Aorta (tissue), 5 donors: ENCODE measurements at regions of chr19 and their contacts with region 1.

Region 1: DNA sequence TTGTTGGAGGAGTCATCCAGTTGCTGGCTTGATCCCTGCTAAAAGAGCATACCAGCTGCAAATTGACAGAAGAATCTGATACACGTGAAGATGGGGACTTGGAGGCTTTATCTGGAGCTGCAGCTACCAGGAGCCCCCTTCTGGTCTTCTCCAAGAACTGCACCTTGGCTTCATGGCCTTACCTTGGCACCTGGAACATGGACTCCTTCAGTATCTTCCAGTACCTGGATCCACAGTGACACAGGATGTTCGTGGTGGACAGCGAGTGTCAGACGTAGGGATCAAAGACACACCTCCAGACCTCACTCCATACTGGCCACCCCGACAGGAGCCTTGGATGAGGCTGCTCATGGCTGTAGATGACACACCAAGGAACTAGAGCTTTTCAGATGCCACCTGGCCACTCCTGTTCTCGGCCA is 9.9 kb upstream of the ACSBG2 start:
- DNase-seq: peak in 1 of 2 donors; percentile 60
- ATAC-seq: peak; percentile 81
- H3K4me3 ChIP-seq: no peak overlapping the region
- H3K27ac ChIP-seq: no peak overlapping the region
- H3K4me1 ChIP-seq: no peaks in the 10 kb centered on the region
- H3K27me3 ChIP-seq: no peaks in the 10 kb centered on the region

Region 2: GRCh38 chr19:5987077-5987818 is 138.3 kb before region 1 on chr19:
- intact Hi-C with region 1: loop called in 1 of 2 experiments (anchors 5 kb)
- DNase-seq: peak; percentile 85 to 86
- ATAC-seq: peak; percentile 79
- H3K4me3 ChIP-seq: peak overlapping the region; percentile 0 to 8
- H3K27ac ChIP-seq: no peak overlapping the region
- H3K4me1 ChIP-seq: peaks cover 0 to 3% of the 10 kb centered on the region in 2 donors
- H3K27me3 ChIP-seq: no peaks in the 10 kb centered on the region

Region 3: GRCh38 chr19:6048808-6049405 is 76.7 kb before region 1 on chr19:
- intact Hi-C with region 1: loop called (anchors 1 to 2 kb)
- DNase-seq: peak; percentile 79 to 91
- ATAC-seq: peak; percentile 95
- H3K4me3 ChIP-seq: no peak overlapping the region
- H3K27ac ChIP-seq: no peak overlapping the region
- H3K4me1 ChIP-seq: no peaks in the 10 kb centered on the region
- H3K27me3 ChIP-seq: no peaks in the 10 kb centered on the region

Region 4: GRCh38 chr19:6164906-6165531 is 39.4 kb after region 1 on chr19:
- intact Hi-C with region 1: no loop called
- DNase-seq: no peak
- ATAC-seq: no peak
- H3K4me3 ChIP-seq: no peak overlapping the region
- H3K27ac ChIP-seq: no peak overlapping the region
- H3K4me1 ChIP-seq: no peaks in the 10 kb centered on the region
- H3K27me3 ChIP-seq: no peaks in the 10 kb centered on the region

Region 5: GRCh38 chr19:6185835-6186834 is 60.6 kb after region 1 on chr19:
- intact Hi-C with region 1: no loop called
- DNase-seq: no peak
- ATAC-seq: peak; percentile 56
- H3K4me3 ChIP-seq: no peak overlapping the region
- H3K27ac ChIP-seq: no peak overlapping the region
- H3K4me1 ChIP-seq: no peaks in the 10 kb centered on the region
- H3K27me3 ChIP-seq: no peaks in the 10 kb centered on the region